MCF 10A (cell line): ENCODE measurements at regions of chr18 and their contacts with region 1.

Region 1: DNA sequence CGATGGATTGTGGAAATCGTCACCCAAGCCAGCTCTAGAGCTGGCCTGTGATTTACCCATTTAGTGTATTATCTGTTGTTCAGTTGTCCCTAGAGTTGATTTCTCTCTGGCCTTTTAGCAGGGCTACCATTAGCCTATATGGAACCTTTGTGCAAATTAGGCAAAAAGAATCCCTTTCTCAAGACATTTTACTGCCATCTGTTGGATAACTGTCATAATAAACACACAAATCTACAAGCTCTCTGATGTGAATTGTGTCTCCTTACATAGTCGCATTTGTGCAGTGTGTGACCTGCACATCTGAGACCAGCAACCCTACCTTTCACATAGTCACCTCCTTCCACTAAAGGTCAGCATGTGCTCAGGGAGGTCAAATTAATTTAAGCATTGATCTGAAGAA is 34.0 kb downstream of the LOXHD1 start:
- DNase-seq: peak; percentile 19
- H3K4me3 Mint-ChIP-seq: no peak overlapping the region
- H3K27ac Mint-ChIP-seq: no peak overlapping the region
- H3K4me1 Mint-ChIP-seq: no peaks in the 10 kb centered on the region
- H3K27me3 Mint-ChIP-seq: peaks cover 16% of the 10 kb centered on the region
- CTCF ChIP-seq: peak; percentile 35

Region 2: GRCh38 chr18:46268671-46269070 is 354.3 kb before region 1 on chr18:
- CTCF ChIA-PET with region 1: interaction called, 12 read pairs
- POLR2A ChIA-PET with region 1: no interaction called
- intact Hi-C with region 1: no loop called
- DNase-seq: no peak
- H3K4me3 Mint-ChIP-seq: no peak overlapping the region
- H3K27ac Mint-ChIP-seq: no peak overlapping the region
- H3K4me1 Mint-ChIP-seq: peaks cover 7% of the 10 kb centered on the region
- H3K27me3 Mint-ChIP-seq: no peaks in the 10 kb centered on the region
- CTCF ChIP-seq: no peak

Region 3: DNA sequence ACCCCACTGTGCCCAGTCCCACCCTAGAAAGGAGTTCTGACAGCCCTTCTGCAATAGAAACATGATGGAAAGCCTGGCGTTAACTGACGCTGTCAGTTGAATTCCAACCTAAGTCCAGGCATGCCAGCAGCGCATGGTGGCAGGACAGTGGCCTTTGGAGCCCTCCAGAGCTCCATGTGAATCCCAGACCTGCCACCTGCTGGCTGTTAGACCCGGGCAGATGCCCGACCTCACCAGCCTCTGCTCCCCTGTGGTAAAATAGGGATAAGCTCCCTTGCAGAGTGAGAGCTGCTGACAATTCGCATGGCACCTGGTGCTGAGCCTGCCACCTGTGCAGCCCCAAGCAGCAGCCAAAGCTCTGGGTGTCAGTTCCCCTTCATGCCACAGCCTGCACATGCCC is 104.6 kb before region 1 on chr18:
- CTCF ChIA-PET with region 1: no interaction called
- POLR2A ChIA-PET with region 1: no interaction called
- intact Hi-C with region 1: no loop called
- DNase-seq: peak; percentile 38
- H3K4me3 Mint-ChIP-seq: no peak overlapping the region
- H3K27ac Mint-ChIP-seq: no peak overlapping the region
- H3K4me1 Mint-ChIP-seq: no peaks in the 10 kb centered on the region
- H3K27me3 Mint-ChIP-seq: peaks cover 91% of the 10 kb centered on the region
- CTCF ChIP-seq: no peak

Region 4: GRCh38 chr18:46649071-46649862 is 26.3 kb after region 1 on chr18:
- CTCF ChIA-PET with region 1: interaction called, 10 read pairs
- POLR2A ChIA-PET with region 1: no interaction called
- intact Hi-C with region 1: no loop called
- DNase-seq: no peak
- H3K4me3 Mint-ChIP-seq: no peak overlapping the region
- H3K27ac Mint-ChIP-seq: no peak overlapping the region
- H3K4me1 Mint-ChIP-seq: no peaks in the 10 kb centered on the region
- H3K27me3 Mint-ChIP-seq: peaks cover 63% of the 10 kb centered on the region
- CTCF ChIP-seq: no peak